Activated B cell treated with CpG ODN at 0.5 μM for 24 hours (primary cell): ENCODE measurements at regions of chr21 and their contacts with region 1.

Region 1: DNA sequence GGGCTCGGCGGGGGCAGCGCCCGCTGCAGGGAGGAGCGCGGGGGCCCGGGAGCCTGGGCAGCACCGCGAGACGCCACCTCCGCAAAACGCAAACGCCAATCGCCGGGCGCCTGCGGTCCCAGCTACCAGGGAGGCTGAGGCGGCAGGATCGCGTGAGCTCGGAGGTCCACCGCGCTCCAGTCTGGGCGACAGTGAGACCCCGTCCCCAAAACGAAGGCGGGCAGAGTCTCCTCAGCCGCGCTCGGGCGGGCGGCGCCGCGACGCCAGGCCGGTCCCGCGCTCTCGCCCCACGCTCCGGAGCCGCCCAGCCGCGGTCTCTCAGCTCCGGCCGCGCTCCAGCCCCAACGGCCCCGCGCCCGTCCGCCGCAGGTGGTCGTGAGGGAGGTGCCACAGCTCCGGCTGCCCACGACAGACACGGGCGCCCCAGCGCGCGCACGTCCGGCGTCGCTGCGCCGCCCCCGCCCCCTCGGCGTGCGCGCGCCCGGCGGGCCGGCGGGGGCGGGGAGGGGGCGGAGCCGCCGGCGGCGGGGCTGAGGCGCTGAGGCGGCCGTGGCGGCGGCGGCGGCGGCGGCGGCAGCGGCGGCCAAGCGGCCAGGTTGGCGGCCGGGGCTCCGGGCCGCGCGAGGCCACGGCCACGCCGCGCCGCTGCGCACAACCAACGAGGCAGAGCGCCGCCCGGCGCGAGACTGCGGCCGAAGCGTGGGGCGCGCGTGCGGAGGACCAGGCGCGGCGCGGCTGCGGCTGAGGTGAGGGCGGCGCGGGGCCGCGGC is at the start of gene ADARB1:
- DNase-seq: peak; percentile 74
- ATAC-seq: peak; percentile 79
- H3K4me3 Mint-ChIP-seq: peak within 1 kb of the TSS; percentile 89
- H3K27ac Mint-ChIP-seq: peak within 1 kb of the TSS; percentile 82
- H3K4me1 Mint-ChIP-seq: peaks cover 41% of the 10 kb centered on the region
- H3K27me3 Mint-ChIP-seq: no peaks in the 10 kb centered on the region
- CTCF ChIP-seq: no peak
- total RNA-seq, gene ADARB1: 21.6 and 22.6 TPM in 2 replicates

Region 2: GRCh38 chr21:44817506-44817880 is 256.7 kb before region 1 on chr21:
- CTCF ChIA-PET with region 1: no interaction called
- POLR2A ChIA-PET with region 1: no interaction called
- intact Hi-C with region 1: loop called (anchors 10 kb)
- DNase-seq: peak; percentile 89
- ATAC-seq: peak; percentile 93
- H3K4me3 Mint-ChIP-seq: peak overlapping the region; percentile 53
- H3K27ac Mint-ChIP-seq: no peak overlapping the region
- H3K4me1 Mint-ChIP-seq: peaks cover 12% of the 10 kb centered on the region
- H3K27me3 Mint-ChIP-seq: no peaks in the 10 kb centered on the region
- CTCF ChIP-seq: no peak

Region 3: GRCh38 chr21:45091550-45092322 is 17.5 kb after region 1 on chr21:
- CTCF ChIA-PET with region 1: interaction called, 3 read pairs
- POLR2A ChIA-PET with region 1: no interaction called
- intact Hi-C with region 1: loop called (anchors 2 kb)
- DNase-seq: no peak
- ATAC-seq: no peak
- H3K4me3 Mint-ChIP-seq: no peak overlapping the region
- H3K27ac Mint-ChIP-seq: no peak overlapping the region
- H3K4me1 Mint-ChIP-seq: peaks cover 85% of the 10 kb centered on the region
- H3K27me3 Mint-ChIP-seq: no peaks in the 10 kb centered on the region
- CTCF ChIP-seq: no peak